ENCODE measurements at regions of chr12 and their contacts with region 1.

Region 1: GRCh38 chr12:120710031-120710804 is at the start of gene UNC119B:
- DNase-seq: peak; percentile 62
- H3K4me3 ChIP-seq: peak within 1 kb of the TSS; percentile 94 to 97
- H3K27ac ChIP-seq: peak within 1 kb of the TSS; percentile 92 to 94
- H3K4me1 ChIP-seq: no peaks in the 10 kb centered on the region
- H3K27me3 ChIP-seq: no peaks in the 10 kb centered on the region
- CTCF ChIP-seq: no peak
- POLR2A ChIP-seq: peak; percentile 41
- total RNA-seq, gene UNC119B: 26.0 to 41.9 TPM

Region 2: GRCh38 chr12:120488057-120488640 is 222.1 kb before region 1 on chr12:
- intact Hi-C with region 1: no loop called
- DNase-seq: no peak
- H3K4me3 ChIP-seq: no peak overlapping the region
- H3K27ac ChIP-seq: no peak overlapping the region
- H3K4me1 ChIP-seq: no peaks in the 10 kb centered on the region
- H3K27me3 ChIP-seq: no peaks in the 10 kb centered on the region
- CTCF ChIP-seq: no peak
- POLR2A ChIP-seq: no peak

Region 3: DNA sequence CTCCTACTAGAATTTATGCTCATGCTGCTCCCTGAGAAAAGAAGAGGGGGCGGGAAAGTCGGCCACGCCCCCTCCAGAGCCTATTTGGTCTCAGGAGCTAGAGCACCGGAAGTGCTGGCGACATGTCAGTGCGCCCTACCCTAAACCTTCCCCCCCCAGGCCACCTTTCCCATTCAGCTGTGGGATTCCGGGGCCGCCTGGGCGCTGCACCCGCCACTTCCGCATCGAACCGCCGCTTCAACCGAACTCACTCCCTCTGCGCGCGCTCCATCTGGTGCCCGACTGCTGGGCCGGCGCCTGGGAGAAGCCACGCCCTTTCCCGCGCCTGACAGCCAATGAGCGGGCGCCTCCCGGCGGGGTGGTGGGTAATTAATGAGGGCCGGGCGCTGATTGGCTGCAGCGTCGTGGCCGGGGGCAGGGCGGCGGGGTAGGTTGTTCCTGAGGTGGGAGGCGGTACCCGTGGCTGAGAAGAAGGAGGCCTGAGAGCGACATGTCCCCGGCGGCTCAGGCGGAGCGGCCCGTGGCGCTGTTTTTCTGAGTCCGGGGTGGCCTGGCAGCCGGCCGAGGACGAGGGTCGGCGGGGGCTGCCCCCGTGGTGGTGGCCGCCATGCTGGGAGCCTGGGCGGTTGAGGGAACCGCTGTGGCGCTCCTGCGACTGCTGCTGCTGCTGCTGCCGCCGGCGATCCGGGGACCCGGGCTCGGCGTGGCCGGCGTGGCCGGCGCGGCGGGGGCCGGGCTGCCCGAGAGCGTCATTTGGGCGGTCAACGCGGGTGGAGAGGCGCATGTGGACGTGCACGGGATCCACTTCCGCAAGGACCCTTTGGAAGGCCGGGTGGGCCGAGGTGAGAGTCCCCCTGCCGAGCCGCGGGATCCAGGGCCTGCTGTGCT is 23.3 kb before region 1 on chr12 and contains the start of gene MLEC:
- intact Hi-C with region 1: loop called (anchors 2 kb)
- DNase-seq: peak; percentile 99
- H3K4me3 ChIP-seq: peak within 1 kb of the TSS; percentile 90 to 94
- H3K27ac ChIP-seq: peak within 1 kb of the TSS; percentile 92 to 93
- H3K4me1 ChIP-seq: peaks cover 12% of the 10 kb centered on the region
- H3K27me3 ChIP-seq: no peaks in the 10 kb centered on the region
- CTCF ChIP-seq: peak in 1 of 4 experiments; percentile 27
- POLR2A ChIP-seq: peak; percentile 85
- total RNA-seq, gene MLEC: 116 to 124 TPM